ENCODE measurements at regions of chr9 and their contacts with region 1.

Region 1: DNA sequence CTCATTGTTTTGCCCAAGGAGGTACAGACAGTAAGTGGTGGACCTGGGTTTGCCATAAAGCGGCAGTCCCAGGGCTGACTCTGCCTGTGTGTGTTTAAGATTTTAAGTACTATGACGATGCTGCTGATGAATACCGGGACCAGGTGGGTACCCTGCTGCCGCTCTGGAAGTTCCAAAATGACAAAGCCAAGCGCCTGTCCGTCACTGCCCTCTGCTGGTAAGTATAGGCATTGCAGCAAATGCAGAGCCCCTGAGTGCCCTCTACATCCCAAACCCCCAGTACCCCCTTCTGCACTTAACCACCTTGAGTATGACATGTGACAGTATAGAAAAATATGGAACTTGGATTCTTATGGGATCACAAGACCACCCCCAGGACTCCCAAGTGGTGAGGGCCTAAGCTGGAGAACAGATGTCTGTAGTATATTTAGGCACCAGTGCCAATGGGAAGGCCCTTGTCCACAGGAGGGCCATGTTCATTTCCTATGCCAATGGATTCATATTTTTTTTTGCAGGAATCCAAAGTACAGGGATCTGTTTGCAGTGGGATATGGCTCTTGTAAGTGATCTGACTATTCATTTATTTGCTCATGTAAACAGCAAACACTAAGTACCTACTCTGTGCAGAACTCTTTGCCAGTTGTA is 22.0 kb downstream of the ENHO start:
- DNase-seq: peak; percentile 65
- H3K4me3 ChIP-seq: no peak overlapping the region
- H3K27ac ChIP-seq: no peak overlapping the region
- H3K4me1 ChIP-seq: no peaks in the 10 kb centered on the region
- H3K27me3 ChIP-seq: no peaks in the 10 kb centered on the region
- CTCF ChIP-seq: peak; percentile 99

Region 2: GRCh38 chr9:34437006-34437925 is 63.5 kb before region 1 on chr9:
- intact Hi-C with region 1: loop called (anchors 2 kb)
- DNase-seq: peak; percentile 65
- H3K4me3 ChIP-seq: no peak overlapping the region
- H3K27ac ChIP-seq: no peak overlapping the region
- H3K4me1 ChIP-seq: no peaks in the 10 kb centered on the region
- H3K27me3 ChIP-seq: no peaks in the 10 kb centered on the region
- CTCF ChIP-seq: peak; percentile 73

Measured in colonic mucosa (tissue), 4 donors.